Caco-2 (cell line): ENCODE measurements at regions of chr12 and their contacts with region 1.

Region 1: GRCh38 chr12:13148064-13148847 is 44.8 kb upstream of the GSG1 start:
- DNase-seq: peak; percentile 78 to 79
- H3K4me3 ChIP-seq: no peak overlapping the region
- H3K4me3 Mint-ChIP-seq: peak overlapping the region; percentile 37
- H3K27ac Mint-ChIP-seq: peak overlapping the region; percentile 29
- H3K4me1 ChIP-seq: peaks cover 50% of the 10 kb centered on the region
- H3K4me1 Mint-ChIP-seq: peaks cover 45% of the 10 kb centered on the region
- H3K27me3 ChIP-seq: no peaks in the 10 kb centered on the region
- H3K27me3 Mint-ChIP-seq: no peaks in the 10 kb centered on the region
- CTCF ChIP-seq: no peak

Region 2: DNA sequence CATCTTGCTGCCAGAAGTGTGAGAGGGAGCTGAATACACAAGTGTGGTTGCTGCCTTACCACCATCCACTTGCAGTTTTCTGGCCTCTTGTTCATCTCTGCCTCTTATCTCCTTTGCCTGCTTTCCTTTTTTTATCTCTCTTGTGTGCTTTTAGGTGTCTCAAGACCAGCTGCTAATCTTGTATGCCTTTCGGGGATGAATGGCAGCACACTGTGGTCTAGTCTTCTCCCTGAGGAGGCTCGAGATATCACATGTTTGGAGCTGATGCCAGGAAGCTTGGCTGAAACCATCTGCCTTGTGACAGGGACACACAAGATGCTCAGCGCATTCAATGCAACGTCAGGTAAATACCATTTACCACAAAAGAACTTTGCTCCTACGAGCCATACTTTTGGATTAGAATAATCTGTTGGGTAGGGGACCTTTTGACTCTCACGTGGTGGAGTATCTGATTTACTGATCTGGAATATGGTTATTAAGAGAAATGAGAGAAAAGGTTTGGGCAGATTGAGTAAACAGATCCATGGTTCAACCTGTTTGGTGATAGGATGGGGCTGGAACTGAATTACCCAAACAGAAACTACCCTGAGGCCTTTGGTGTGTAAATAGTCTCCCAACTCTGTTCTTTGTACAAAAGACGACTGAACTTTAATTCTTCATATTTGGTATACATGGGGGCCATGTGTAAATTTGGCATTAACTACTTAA is 86.7 kb before region 1 on chr12:
- CTCF ChIA-PET with region 1: no interaction called
- POLR2A ChIA-PET with region 1: no interaction called
- intact Hi-C with region 1: no loop called
- DNase-seq: peak in 1 of 2 experiments; percentile 20
- H3K4me3 ChIP-seq: no peak overlapping the region
- H3K4me3 Mint-ChIP-seq: no peak overlapping the region
- H3K27ac Mint-ChIP-seq: no peak overlapping the region
- H3K4me1 ChIP-seq: peaks cover 11% of the 10 kb centered on the region
- H3K4me1 Mint-ChIP-seq: no peaks in the 10 kb centered on the region
- H3K27me3 ChIP-seq: no peaks in the 10 kb centered on the region
- H3K27me3 Mint-ChIP-seq: no peaks in the 10 kb centered on the region
- CTCF ChIP-seq: no peak

Region 3: GRCh38 chr12:13127444-13127843 is 20.8 kb before region 1 on chr12:
- CTCF ChIA-PET with region 1: interaction called, 4 read pairs
- POLR2A ChIA-PET with region 1: no interaction called
- intact Hi-C with region 1: loop called (anchors 1 kb)
- DNase-seq: peak; percentile 56 to 59
- H3K4me3 ChIP-seq: no peak overlapping the region
- H3K4me3 Mint-ChIP-seq: peak overlapping the region; percentile 31
- H3K27ac Mint-ChIP-seq: peak overlapping the region; percentile 92
- H3K4me1 ChIP-seq: peaks cover 60% of the 10 kb centered on the region
- H3K4me1 Mint-ChIP-seq: peaks cover 46% of the 10 kb centered on the region
- H3K27me3 ChIP-seq: no peaks in the 10 kb centered on the region
- H3K27me3 Mint-ChIP-seq: no peaks in the 10 kb centered on the region
- CTCF ChIP-seq: no peak

Region 4: DNA sequence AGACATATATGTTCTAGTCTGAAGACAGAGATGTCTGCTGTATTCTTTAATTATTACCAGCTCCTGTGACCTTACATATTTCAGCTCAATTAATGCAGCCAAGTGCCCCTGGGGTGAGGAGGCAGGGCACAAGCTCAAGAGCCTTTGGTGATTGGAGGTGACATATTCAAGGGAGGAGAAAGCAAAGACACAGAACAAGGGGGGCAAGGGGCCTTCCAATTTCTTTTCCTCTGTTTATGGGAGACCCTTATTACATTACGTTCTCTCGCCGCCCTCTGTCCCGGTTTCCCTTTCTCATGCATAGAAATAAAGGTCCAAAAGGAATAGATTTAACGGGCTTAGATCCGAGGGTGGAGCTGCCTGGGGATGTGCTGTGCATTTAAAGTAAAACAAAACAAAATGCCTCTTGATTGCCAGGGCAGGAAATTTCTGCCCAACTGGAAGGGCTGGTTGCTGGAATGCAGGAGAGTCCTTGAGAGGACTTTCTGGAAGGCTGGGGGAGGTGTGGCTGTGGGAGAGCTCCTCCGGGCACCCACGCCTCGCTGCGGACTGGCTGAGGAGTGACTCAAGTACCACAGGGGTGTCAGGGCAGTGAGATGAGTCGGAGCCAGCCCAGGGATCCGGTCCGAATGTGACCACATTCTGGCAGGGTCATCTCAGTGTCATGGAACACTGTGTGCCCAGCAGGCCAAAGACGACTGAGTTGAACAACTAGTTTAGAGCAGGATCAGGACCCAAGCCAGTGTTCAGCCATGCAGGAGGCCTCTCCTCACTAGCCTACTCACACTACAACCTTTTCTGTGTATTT is 12.7 kb before region 1 on chr12:
- CTCF ChIA-PET with region 1: no interaction called
- POLR2A ChIA-PET with region 1: no interaction called
- intact Hi-C with region 1: loop called (anchors 1 kb)
- DNase-seq: peak; percentile 83 to 89
- H3K4me3 ChIP-seq: no peak overlapping the region
- H3K4me3 Mint-ChIP-seq: peak overlapping the region; percentile 51
- H3K27ac Mint-ChIP-seq: peak overlapping the region; percentile 76
- H3K4me1 ChIP-seq: peaks cover 36% of the 10 kb centered on the region
- H3K4me1 Mint-ChIP-seq: peaks cover 45% of the 10 kb centered on the region
- H3K27me3 ChIP-seq: no peaks in the 10 kb centered on the region
- H3K27me3 Mint-ChIP-seq: no peaks in the 10 kb centered on the region
- CTCF ChIP-seq: peak in 1 of 2 experiments; percentile 21

Region 5: GRCh38 chr12:13173012-13173932 is 25.0 kb after region 1 on chr12:
- CTCF ChIA-PET with region 1: no interaction called
- POLR2A ChIA-PET with region 1: no interaction called
- intact Hi-C with region 1: loop called (anchors 2 kb)
- DNase-seq: no peak
- H3K4me3 ChIP-seq: no peak overlapping the region
- H3K4me3 Mint-ChIP-seq: no peak overlapping the region
- H3K27ac Mint-ChIP-seq: peak overlapping the region; percentile 43
- H3K4me1 ChIP-seq: peaks cover 35% of the 10 kb centered on the region
- H3K4me1 Mint-ChIP-seq: peaks cover 50% of the 10 kb centered on the region
- H3K27me3 ChIP-seq: no peaks in the 10 kb centered on the region
- H3K27me3 Mint-ChIP-seq: no peaks in the 10 kb centered on the region
- CTCF ChIP-seq: no peak